GM13976 (cell line): ENCODE measurements at regions of chr5 and their contacts with region 1.

Region 1: GRCh38 chr5:158174918-158175851 is 316.2 kb upstream of the CLINT1 start:
- DNase-seq: peak; percentile 75
- CTCF ChIP-seq: peak; percentile 78

Region 2: GRCh38 chr5:158682631-158683030 is 507.4 kb after region 1 on chr5:
- in situ Hi-C with region 1: loop called (anchors 10 kb)
- DNase-seq: no peak
- CTCF ChIP-seq: no peak